Right ventricle myocardium inferior (tissue), 1 donor: ENCODE measurements at regions of chr16 and their contacts with region 1.

Region 1: DNA sequence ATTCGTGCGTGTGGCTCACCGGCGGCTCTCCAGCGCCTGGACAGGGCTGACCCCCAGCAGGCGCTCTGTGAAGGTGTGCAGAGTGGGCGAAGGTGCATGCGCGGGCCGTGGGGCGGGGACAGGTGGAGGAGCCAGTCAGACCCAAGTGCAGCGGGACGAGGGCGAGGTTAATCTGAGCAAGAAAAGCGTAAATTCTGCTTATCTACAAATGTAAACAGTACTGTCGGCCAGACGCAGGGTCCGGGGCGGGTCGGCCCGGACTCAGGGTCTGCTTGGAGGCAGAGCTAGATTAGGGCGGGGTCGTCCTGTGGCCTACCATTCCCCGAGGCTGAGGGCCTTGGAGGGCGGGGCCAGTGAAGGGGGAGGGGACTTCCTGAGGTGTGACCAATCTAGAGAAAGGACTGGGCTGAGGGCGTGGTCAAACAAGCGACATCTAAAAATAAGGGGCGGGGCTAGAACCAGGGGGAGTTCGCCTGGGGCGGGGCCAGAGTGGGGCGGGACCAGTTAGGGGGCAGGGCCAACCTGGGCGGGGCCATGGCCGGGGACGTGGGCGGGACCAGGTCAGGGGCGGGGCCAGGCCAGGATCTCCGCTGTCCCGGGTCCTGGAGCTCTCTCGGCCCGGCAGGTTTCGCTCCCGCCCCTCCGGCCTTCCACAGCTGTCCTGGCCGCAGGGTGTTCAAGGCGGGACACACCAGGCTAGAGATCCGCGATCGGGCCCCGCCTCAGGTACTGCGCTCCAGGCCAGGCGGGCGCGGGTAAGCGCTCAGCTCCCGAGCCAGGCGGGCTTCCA is at the start of gene SEC14L5:
- DNase-seq: peak; percentile 98
- ATAC-seq: peak; percentile 98
- total RNA-seq, gene SEC14L5: 23.5 TPM

Region 2: GRCh38 chr16:4624015-4624826 is 333.7 kb before region 1 on chr16 and contains the start of gene MGRN1:
- intact Hi-C with region 1: loop called (anchors 10 kb)
- DNase-seq: peak; percentile 95
- ATAC-seq: peak; percentile 99
- total RNA-seq, gene MGRN1: 32.2 TPM

Region 3: GRCh38 chr16:4734063-4734729 is 223.7 kb before region 1 on chr16 and contains the starts of genes ANKS3 and DNAAF8:
- intact Hi-C with region 1: loop called (anchors 5 kb)
- DNase-seq: peak; percentile 97
- ATAC-seq: peak; percentile 98
- total RNA-seq, gene ANKS3: 9.1 TPM
- total RNA-seq, gene DNAAF8: 1.5 TPM

Region 4: DNA sequence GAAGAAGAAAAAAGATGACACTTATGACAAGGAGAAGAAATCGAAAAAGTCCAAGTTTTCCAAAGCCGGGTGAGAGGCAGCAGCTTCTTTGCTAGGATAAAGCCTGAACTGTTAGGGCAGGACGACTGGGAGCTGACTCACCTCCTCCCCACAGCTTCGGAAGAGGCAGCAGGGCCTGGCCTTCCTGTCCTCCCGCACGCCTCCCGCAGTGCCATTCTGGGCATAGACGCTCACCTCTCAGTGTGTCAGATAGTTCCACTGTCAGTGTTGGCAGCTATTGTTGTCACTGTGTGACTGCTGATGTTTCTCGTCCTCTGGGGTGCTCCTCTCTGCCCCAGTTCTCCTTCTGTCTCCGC is 98.0 kb before region 1 on chr16:
- intact Hi-C with region 1: loop called (anchors 5 kb)
- DNase-seq: no peak
- ATAC-seq: no peak

Region 5: DNA sequence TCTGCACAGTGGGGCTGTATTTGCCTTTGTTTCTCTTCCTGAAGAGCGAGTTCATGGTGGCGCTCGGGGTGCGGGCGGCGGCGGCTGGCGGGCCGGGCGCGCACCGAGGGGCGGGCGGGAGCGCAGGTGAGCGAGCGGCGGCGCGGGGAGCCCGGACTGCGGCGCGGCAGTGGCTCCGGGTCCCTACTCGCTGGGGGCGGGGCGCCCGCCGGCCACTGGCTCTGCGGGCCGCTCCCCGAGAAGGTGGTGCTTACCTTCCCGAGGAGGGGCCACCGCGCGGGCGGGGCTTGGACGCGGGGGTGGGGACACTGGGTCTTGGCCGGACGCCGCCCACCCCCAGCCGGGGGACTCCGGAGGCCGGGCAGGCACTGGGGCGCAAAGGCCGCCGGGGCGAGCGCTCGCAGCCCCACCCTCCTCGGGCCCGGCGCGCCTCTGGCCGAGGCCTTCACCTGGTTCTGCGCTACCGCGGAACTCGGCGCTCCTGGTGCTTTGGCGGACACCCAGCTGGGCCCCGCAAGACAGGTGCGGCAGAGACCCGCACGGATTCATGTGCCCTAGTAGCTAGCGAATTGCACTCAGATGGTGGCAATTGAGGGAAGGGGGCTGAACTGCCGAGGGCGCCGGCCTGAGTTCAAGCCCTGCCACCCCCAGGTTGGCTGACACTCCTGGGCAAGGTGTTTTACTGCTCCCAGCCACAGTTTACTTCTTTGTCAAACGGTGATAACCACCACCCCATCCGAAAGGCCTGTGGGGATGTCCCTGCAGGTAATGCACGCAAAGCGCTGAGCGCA is 20.7 kb before region 1 on chr16 and contains the start of gene PPL:
- intact Hi-C with region 1: no loop called
- DNase-seq: peak; percentile 86
- ATAC-seq: peak; percentile 60
- total RNA-seq, gene PPL: 20.2 TPM